Calu3 (cell line): ENCODE measurements at regions of chr15 and their contacts with region 1.

Region 1: DNA sequence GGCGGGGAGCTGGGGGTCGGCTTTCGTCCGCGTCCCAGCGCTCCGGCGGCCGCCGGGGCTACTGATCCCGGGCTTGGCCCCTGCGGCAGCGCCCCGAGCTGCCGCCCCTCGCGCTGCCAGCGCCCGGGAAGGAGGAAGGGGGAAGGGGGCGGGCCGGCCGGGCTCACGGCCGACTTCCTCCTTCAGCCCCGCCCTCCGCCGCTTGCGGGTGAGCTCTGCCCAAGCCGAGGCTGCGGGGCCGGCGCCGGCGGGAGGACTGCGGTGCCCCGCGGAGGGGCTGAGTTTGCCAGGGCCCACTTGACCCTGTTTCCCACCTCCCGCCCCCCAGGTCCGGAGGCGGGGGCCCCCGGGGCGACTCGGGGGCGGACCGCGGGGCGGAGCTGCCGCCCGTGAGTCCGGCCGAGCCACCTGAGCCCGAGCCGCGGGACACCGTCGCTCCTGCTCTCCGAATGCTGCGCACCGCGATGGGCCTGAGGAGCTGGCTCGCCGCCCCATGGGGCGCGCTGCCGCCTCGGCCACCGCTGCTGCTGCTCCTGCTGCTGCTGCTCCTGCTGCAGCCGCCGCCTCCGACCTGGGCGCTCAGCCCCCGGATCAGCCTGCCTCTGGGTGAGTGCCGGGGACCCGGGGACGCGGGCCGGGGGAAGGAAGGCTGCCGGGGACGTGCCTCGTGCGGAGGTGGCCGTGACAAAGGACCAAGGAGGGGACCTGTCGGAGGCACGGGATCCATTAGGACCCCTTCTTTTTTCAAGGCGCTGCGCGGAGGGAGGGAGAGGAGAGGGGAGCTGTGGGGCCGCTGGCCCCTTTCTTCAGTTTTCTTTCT is at the start of gene SEMA4B:
- DNase-seq: peak; percentile 84
- H3K4me3 Mint-ChIP-seq: peak within 1 kb of the TSS; percentile 73
- H3K27ac Mint-ChIP-seq: peak within 1 kb of the TSS; percentile 52
- H3K4me1 Mint-ChIP-seq: peaks cover 19% of the 10 kb centered on the region
- H3K27me3 Mint-ChIP-seq: no peaks in the 10 kb centered on the region
- CTCF ChIP-seq: no peak
- total RNA-seq, gene SEMA4B: 67.3 and 73.0 TPM in 2 replicates

Region 2: DNA sequence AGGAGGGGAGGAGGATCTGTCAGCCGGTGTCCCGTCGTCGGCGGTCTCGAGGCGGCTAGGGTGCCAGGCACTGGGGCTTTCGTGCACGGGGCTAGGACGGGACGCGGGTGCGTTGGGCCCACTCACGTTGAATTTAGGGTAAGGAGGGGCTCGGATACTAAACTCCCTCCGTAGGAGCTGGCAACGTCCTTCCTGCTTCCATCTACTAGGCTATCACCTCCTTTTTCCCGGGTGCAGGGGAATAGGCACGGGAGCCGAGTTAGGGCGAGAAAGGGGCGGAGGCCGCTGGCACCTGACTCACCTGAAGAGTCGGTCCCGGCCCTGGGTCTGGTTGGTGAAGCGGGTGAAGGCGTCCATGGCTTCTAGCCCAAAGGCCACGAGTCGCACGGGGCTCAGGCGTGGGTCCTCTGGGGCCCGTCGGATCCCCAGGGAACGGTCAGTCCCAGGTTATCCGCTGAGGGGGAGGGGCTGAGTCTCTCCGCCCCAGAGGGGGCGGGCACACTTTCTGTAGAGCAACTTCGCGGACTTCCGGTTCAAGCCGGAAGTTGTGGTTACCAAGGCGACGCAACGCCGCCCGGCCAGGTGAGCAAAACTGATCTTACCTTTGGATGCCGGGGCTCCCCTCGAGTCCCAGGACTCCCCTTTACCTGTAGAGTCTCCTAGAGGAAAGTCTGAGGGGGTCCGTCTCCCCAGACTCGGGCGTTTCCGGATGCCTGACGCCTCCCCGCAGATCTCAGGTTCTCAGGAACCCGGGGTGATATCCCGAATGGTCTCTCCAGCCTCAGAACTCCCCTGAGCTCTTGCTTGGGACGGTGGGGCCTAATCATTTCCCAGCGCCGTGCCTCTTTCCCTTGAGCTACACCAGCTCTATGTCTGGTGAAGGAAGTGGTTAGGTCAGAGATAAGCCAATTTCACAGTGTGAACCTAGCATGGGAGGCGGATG is 510.8 kb before region 1 on chr15 and contains the starts of genes PEX11A and WDR93:
- CTCF ChIA-PET with region 1: no interaction called
- intact Hi-C with region 1: no loop called
- DNase-seq: peak; percentile 92
- H3K4me3 Mint-ChIP-seq: peak within 1 kb of the TSS; percentile 96
- H3K27ac Mint-ChIP-seq: peak within 1 kb of the TSS; percentile 88
- H3K4me1 Mint-ChIP-seq: no peaks in the 10 kb centered on the region
- H3K27me3 Mint-ChIP-seq: peaks cover 13% of the 10 kb centered on the region
- CTCF ChIP-seq: no peak
- total RNA-seq, gene PEX11A: 6.7 and 8.0 TPM in 2 replicates
- total RNA-seq, gene WDR93: not detected in 2 replicates

Region 3: GRCh38 chr15:90184118-90184785 is 17.1 kb before region 1 on chr15:
- CTCF ChIA-PET with region 1: no interaction called
- intact Hi-C with region 1: no loop called
- DNase-seq: peak; percentile 70
- H3K4me3 Mint-ChIP-seq: peak overlapping the region; percentile 75
- H3K27ac Mint-ChIP-seq: peak overlapping the region; percentile 88
- H3K4me1 Mint-ChIP-seq: peaks cover 33% of the 10 kb centered on the region
- H3K27me3 Mint-ChIP-seq: no peaks in the 10 kb centered on the region
- CTCF ChIP-seq: no peak

Region 4: GRCh38 chr15:90214553-90215196 is 13.3 kb after region 1 on chr15:
- CTCF ChIA-PET with region 1: interaction called, 13 read pairs
- intact Hi-C with region 1: no loop called
- DNase-seq: no peak
- H3K4me3 Mint-ChIP-seq: no peak overlapping the region
- H3K27ac Mint-ChIP-seq: no peak overlapping the region
- H3K4me1 Mint-ChIP-seq: peaks cover 53% of the 10 kb centered on the region
- H3K27me3 Mint-ChIP-seq: no peaks in the 10 kb centered on the region
- CTCF ChIP-seq: peak; percentile 38